Natural killer cell (primary cell): ENCODE measurements at regions of chr5 and their contacts with region 1.

Region 1: DNA sequence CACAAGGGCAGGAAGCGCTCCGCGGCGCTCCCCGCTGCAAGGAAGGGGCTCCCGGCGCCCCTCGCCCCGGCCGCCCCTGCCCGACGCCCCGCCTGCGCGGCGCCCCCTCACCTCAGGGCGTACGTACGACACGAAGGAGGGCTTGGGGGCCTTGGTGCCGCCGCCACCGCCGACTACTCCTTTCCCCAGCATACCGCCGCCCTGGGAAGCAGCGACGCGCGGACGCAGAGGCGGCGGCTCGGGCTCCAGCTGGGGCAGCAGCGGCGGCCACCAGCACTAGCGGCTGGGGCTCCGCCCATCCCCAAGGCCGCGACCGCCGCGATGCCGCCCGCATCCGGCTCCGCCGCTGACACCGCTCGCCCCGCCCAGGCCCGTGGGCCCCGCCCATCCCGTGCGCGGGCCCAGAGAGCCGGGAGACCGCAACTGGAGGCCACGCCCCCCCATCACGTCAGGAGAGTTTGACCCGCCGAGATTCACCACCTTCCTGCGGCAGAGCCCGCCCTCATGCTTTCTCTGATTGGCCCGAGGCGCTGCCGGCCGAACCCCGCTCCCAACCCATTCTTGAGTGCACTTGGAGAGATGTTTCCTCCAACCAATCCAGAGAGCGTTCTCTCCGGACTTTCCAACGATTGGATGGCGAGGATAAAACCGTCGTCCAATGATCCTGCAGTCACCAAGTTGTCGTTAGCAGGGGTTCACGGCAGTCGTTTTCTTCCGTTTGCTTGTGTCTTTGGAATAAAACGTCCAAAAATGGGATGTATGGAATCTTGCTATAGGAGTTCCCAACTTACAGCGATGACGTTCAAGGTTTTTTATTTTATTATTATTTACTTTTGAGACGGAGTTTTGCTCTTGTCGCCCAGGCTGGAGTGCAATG is at the start of gene MTMR12:
- DNase-seq: peak; percentile 100
- ATAC-seq: peak; percentile 87 to 97 (median 89)
- H3K4me3 ChIP-seq: peak within 1 kb of the TSS; percentile 73
- H3K4me3 Mint-ChIP-seq: peak within 1 kb of the TSS; percentile 95
- H3K27ac ChIP-seq: peak within 1 kb of the TSS; percentile 85
- H3K27ac Mint-ChIP-seq: peak within 1 kb of the TSS; percentile 95
- H3K4me1 ChIP-seq: peaks cover 33% of the 10 kb centered on the region
- H3K4me1 Mint-ChIP-seq: peaks cover 42% of the 10 kb centered on the region in 2 donors
- H3K27me3 ChIP-seq: no peaks in the 10 kb centered on the region
- H3K27me3 Mint-ChIP-seq: no peaks in the 10 kb centered on the region
- CTCF ChIP-seq: no peak
- total RNA-seq, gene MTMR12: 36.9 to 47.7 (median 39.8) TPM

Region 2: GRCh38 chr5:32174011-32174870 is 138.6 kb before region 1 on chr5 and contains the start of gene GOLPH3:
- intact Hi-C with region 1: loop called (anchors 1 kb)
- DNase-seq: peak; percentile 92
- ATAC-seq: peak; percentile 85 to 94 (median 87)
- H3K4me3 ChIP-seq: peak within 1 kb of the TSS; percentile 82
- H3K4me3 Mint-ChIP-seq: peak within 1 kb of the TSS; percentile 98
- H3K27ac ChIP-seq: peak within 1 kb of the TSS; percentile 93
- H3K27ac Mint-ChIP-seq: peak within 1 kb of the TSS; percentile 98
- H3K4me1 ChIP-seq: peaks cover 18% of the 10 kb centered on the region
- H3K4me1 Mint-ChIP-seq: peaks cover 32 to 34% of the 10 kb centered on the region in 2 donors
- H3K27me3 ChIP-seq: no peaks in the 10 kb centered on the region
- H3K27me3 Mint-ChIP-seq: peaks cover 0 to 9% of the 10 kb centered on the region in 2 donors
- CTCF ChIP-seq: no peak
- total RNA-seq, gene GOLPH3: 67.6 to 70.6 (median 69.3) TPM

Region 3: GRCh38 chr5:32283539-32284377 is 29.1 kb before region 1 on chr5:
- intact Hi-C with region 1: loop called (anchors 1 kb)
- DNase-seq: peak in 1 of 2 donors; percentile 41
- ATAC-seq: peak; percentile 84 to 91 (median 87)
- H3K4me3 ChIP-seq: no peak overlapping the region
- H3K4me3 Mint-ChIP-seq: peak overlapping the region; percentile 25
- H3K27ac ChIP-seq: peak overlapping the region; percentile 9
- H3K27ac Mint-ChIP-seq: peak overlapping the region; percentile 81 to 94
- H3K4me1 ChIP-seq: peaks cover 26% of the 10 kb centered on the region
- H3K4me1 Mint-ChIP-seq: peaks cover 54 to 63% of the 10 kb centered on the region in 2 donors
- H3K27me3 ChIP-seq: no peaks in the 10 kb centered on the region
- H3K27me3 Mint-ChIP-seq: no peaks in the 10 kb centered on the region
- CTCF ChIP-seq: no peak

Region 4: GRCh38 chr5:32542216-32543059 is 229.6 kb after region 1 on chr5:
- intact Hi-C with region 1: no loop called
- DNase-seq: peak in 1 of 2 donors; percentile 41
- ATAC-seq: no peak
- H3K4me3 ChIP-seq: no peak overlapping the region
- H3K4me3 Mint-ChIP-seq: no peak overlapping the region
- H3K27ac ChIP-seq: no peak overlapping the region
- H3K27ac Mint-ChIP-seq: no peak overlapping the region
- H3K4me1 ChIP-seq: peaks cover 19% of the 10 kb centered on the region
- H3K4me1 Mint-ChIP-seq: no peaks in the 10 kb centered on the region
- H3K27me3 ChIP-seq: no peaks in the 10 kb centered on the region
- H3K27me3 Mint-ChIP-seq: peaks cover 0 to 5% of the 10 kb centered on the region in 2 donors
- CTCF ChIP-seq: no peak